ENCODE measurements at regions of chr2 and their contacts with region 1.

Region 1: GRCh38 chr2:45664635-45665261 is 13.3 kb downstream of the PRKCE start:
- DNase-seq: peak; percentile 39
- CTCF ChIP-seq: no peak

Region 2: GRCh38 chr2:45636008-45636407 is 28.7 kb before region 1 on chr2:
- CTCF ChIA-PET with region 1: no interaction called
- POLR2A ChIA-PET with region 1: no interaction called
- DNase-seq: no peak
- CTCF ChIP-seq: no peak

Region 3: GRCh38 chr2:45650851-45651414 is 13.8 kb before region 1 on chr2:
- CTCF ChIA-PET with region 1: interaction called, 18 read pairs
- POLR2A ChIA-PET with region 1: no interaction called
- DNase-seq: peak; percentile 91
- CTCF ChIP-seq: peak; percentile 32

Region 4: GRCh38 chr2:45743531-45744396 is 79.0 kb after region 1 on chr2:
- CTCF ChIA-PET with region 1: no interaction called
- POLR2A ChIA-PET with region 1: no interaction called
- DNase-seq: no peak
- CTCF ChIP-seq: no peak